MCF 10A (cell line): ENCODE measurements at regions of chr20 and their contacts with region 1.

Region 1: GRCh38 chr20:12925214-12925755 is 83.5 kb upstream of the SPTLC3 start:
- DNase-seq: peak; percentile 78
- H3K4me3 Mint-ChIP-seq: no peak overlapping the region
- H3K27ac Mint-ChIP-seq: no peak overlapping the region
- H3K4me1 Mint-ChIP-seq: peaks cover 24% of the 10 kb centered on the region
- H3K27me3 Mint-ChIP-seq: no peaks in the 10 kb centered on the region
- CTCF ChIP-seq: peak; percentile 94

Region 2: DNA sequence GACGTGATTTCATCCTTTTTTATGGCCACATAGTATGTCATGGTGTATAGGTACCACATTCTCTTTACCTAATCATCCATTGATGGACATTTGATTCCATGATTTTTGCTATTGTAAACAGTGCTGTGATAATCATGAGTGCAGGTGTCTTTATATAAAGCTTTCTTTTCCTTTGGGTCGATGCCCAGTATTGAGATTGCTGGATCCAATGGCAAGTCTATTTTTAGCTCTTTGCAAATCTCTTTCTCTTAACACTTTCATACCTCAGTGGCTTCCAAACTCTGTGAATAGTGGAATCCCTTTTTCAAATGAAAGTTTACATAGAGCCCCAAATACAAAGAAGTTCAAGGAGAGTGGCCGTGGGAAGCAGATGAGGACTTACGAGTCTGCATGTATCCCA is 22.3 kb before region 1 on chr20:
- CTCF ChIA-PET with region 1: interaction called, 11 read pairs
- POLR2A ChIA-PET with region 1: no interaction called
- intact Hi-C with region 1: no loop called
- DNase-seq: no peak
- H3K4me3 Mint-ChIP-seq: no peak overlapping the region
- H3K27ac Mint-ChIP-seq: no peak overlapping the region
- H3K4me1 Mint-ChIP-seq: no peaks in the 10 kb centered on the region
- H3K27me3 Mint-ChIP-seq: peaks cover 12% of the 10 kb centered on the region
- CTCF ChIP-seq: no peak

Region 3: DNA sequence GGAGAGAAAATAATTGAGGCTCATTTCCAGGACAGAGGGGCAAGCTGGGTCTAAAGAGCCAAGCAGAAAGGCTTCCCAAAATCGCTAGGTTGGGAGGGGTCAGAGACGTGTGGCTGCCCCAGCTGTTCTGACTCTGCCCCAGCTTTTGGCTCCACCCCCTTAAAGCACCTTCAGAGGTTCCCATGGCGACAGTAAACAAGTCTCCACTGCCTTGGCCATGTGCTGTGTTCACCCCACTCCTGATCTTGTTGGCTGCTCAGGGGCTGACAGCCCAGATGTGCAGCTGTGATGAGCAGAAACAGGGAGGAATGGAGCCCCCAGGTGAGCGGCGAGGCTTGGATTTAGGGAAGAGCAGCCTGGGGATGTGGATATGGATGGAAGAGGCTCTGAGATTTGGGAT is 10.8 kb after region 1 on chr20:
- CTCF ChIA-PET with region 1: interaction called, 32 read pairs
- POLR2A ChIA-PET with region 1: interaction called, 5 read pairs
- intact Hi-C with region 1: no loop called
- DNase-seq: no peak
- H3K4me3 Mint-ChIP-seq: no peak overlapping the region
- H3K27ac Mint-ChIP-seq: peak overlapping the region; percentile 52
- H3K4me1 Mint-ChIP-seq: peaks cover 17% of the 10 kb centered on the region
- H3K27me3 Mint-ChIP-seq: no peaks in the 10 kb centered on the region
- CTCF ChIP-seq: no peak

Region 4: DNA sequence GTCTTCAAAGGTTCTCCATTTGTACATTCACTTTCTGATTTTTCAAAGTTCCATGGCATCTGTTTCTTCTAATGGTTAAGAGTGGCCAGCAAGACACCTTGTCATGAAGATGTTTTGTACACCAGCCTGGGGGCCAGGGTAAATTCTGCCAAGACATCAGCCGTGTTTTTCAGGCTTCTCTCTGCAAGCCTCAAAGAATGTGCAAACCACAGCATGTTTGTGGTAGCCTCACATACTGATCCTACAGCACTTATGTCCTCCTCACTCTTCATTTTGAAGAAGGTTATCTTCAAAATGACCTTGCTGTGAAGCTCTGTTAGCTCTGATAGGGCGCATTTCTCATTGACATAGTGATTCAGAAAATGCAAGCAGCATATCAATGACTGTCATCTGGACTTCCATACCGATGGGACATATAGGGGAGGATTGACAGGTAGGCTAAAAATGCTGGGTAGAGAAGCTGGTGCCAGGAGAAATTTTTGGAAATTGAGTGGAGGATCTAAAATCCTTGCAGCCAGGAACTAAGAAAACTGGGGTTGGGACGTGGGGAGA is 24.2 kb after region 1 on chr20:
- CTCF ChIA-PET with region 1: interaction called, 31 read pairs
- POLR2A ChIA-PET with region 1: interaction called, 3 read pairs
- intact Hi-C with region 1: no loop called
- DNase-seq: no peak
- H3K4me3 Mint-ChIP-seq: no peak overlapping the region
- H3K27ac Mint-ChIP-seq: peak overlapping the region; percentile 49
- H3K4me1 Mint-ChIP-seq: no peaks in the 10 kb centered on the region
- H3K27me3 Mint-ChIP-seq: no peaks in the 10 kb centered on the region
- CTCF ChIP-seq: no peak

Region 5: DNA sequence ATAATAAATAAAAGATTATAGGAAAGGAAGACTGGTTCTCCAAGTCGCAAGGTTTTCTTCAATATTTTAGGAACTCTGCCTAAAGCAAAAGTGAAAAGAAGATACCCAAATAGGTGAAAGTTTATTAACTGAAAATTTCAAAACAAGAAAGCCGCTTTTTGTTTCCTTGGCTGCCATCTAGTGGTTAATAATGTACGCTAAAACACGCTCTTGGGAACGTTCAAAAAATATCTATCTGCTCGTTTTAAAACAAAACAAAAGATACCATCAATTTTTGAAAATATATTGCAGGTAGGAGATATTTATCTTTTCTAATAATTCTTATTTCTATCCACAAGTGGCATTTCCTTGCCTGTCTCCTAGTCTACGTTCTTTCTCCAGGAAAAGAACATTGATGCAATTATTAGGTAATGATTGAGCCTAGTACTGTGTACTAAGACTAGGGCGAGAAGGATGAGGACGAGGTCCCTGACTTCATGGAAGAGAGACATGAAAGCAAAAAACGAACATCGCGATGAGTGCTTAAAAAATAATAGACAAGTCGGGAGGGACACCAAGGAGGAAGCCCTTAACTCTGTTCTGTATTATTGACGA is 180.7 kb after region 1 on chr20:
- CTCF ChIA-PET with region 1: interaction called, 44 read pairs
- POLR2A ChIA-PET with region 1: interaction called, 3 read pairs
- intact Hi-C with region 1: loop called (anchors 1 kb)
- DNase-seq: peak; percentile 51
- H3K4me3 Mint-ChIP-seq: no peak overlapping the region
- H3K27ac Mint-ChIP-seq: no peak overlapping the region
- H3K4me1 Mint-ChIP-seq: peaks cover 11% of the 10 kb centered on the region
- H3K27me3 Mint-ChIP-seq: no peaks in the 10 kb centered on the region
- CTCF ChIP-seq: peak; percentile 66

Region 6: DNA sequence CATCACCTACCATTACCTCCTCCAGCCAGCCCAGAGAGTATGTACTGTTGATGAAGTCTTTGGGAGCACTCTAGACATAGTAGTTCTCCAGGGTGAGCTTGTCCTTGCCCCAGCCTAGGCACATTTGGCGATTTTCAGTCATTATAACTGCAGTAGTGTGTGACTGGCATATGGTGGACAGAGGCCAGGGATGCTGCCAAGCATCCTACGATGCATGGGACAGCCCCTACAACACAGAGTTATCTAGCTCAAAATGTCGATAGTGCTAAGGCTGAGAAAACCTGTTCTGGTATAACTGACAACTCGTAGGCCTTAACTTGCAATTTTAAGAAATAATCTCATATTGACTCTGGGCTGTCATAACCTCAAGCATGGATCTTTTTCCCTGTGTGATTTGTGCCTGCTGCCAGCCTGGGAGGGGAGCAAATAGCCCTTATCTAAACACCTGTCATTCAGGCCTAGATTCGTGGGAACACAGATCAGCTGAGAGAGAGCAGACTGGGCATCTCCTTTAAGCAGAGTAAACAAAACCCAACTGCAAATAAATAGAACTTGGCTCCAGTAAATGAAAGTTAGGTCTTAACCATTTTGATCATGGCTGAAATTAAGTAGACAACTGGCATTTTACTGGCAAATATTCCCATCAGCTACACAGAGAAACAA is 186.1 kb after region 1 on chr20:
- CTCF ChIA-PET with region 1: interaction called, 16 read pairs
- POLR2A ChIA-PET with region 1: no interaction called
- intact Hi-C with region 1: no loop called
- DNase-seq: no peak
- H3K4me3 Mint-ChIP-seq: no peak overlapping the region
- H3K27ac Mint-ChIP-seq: no peak overlapping the region
- H3K4me1 Mint-ChIP-seq: no peaks in the 10 kb centered on the region
- H3K27me3 Mint-ChIP-seq: no peaks in the 10 kb centered on the region
- CTCF ChIP-seq: no peak